Naive thymus-derived CD8-positive, alpha-beta T cell (primary cell): ENCODE measurements at regions of chr15 and their contacts with region 1.

Region 1: GRCh38 chr15:73950831-73951561 is 24.7 kb downstream of the LOXL1 start:
- DNase-seq: peak; percentile 60 to 88 (median 70)
- ATAC-seq: peak; percentile 98 to 100
- H3K4me3 Mint-ChIP-seq: no peak overlapping the region
- H3K27ac Mint-ChIP-seq: peak overlapping the region; percentile 59 to 97 (median 89)
- H3K4me1 Mint-ChIP-seq: peaks cover 5 to 17% (median 7%) of the 10 kb centered on the region in 4 donors
- H3K27me3 Mint-ChIP-seq: no peaks in the 10 kb centered on the region

Region 2: GRCh38 chr15:73964736-73965093 is 13.7 kb after region 1 on chr15:
- POLR2A ChIA-PET with region 1: interaction called, 14 read pairs
- DNase-seq: peak; percentile 71 to 93 (median 83)
- ATAC-seq: peak; percentile 85 to 86
- H3K4me3 Mint-ChIP-seq: peak overlapping the region; percentile 69 to 91 (median 82)
- H3K27ac Mint-ChIP-seq: peak overlapping the region; percentile 22 to 93 (median 84)
- H3K4me1 Mint-ChIP-seq: peaks cover 17 to 39% (median 33%) of the 10 kb centered on the region in 4 donors
- H3K27me3 Mint-ChIP-seq: no peaks in the 10 kb centered on the region

Region 3: GRCh38 chr15:74062671-74063070 is 111.7 kb after region 1 on chr15:
- POLR2A ChIA-PET with region 1: no interaction called
- DNase-seq: no peak
- ATAC-seq: no peak
- H3K4me3 Mint-ChIP-seq: no peak overlapping the region
- H3K27ac Mint-ChIP-seq: no peak overlapping the region
- H3K4me1 Mint-ChIP-seq: peaks cover 10 to 21% (median 14%) of the 10 kb centered on the region in 4 donors
- H3K27me3 Mint-ChIP-seq: peaks cover 0 to 3% (median 2%) of the 10 kb centered on the region in 5 donors